PC-3 (cell line): ENCODE measurements at regions of chr4 and their contacts with region 1.

Region 1: DNA sequence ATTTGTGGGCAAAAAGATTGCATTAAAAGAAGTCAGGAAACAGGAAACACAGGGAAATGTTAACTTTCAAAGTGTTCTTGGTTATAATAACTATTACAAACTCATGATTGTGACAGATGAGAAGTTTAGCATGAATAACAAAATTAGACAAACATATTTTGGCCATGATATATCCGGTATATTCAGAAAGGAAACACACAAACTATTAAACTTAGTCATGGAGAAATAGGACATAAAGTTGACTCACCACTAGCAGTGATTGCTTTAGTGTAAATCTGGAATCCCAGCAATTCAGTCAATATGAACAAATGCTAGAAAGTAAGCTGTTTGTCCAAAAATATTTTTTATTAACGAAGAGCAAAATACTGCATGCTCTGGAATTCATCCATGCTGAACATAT is 1299.9 kb downstream of the C4orf33 start:
- DNase-seq: peak; percentile 73
- ATAC-seq: peak; percentile 94
- H3K4me3 ChIP-seq: no peak overlapping the region
- H3K27ac ChIP-seq: peak overlapping the region; percentile 71
- H3K4me1 ChIP-seq: peaks cover 14% of the 10 kb centered on the region
- H3K27me3 ChIP-seq: no peaks in the 10 kb centered on the region
- CTCF ChIP-seq: no peak

Region 2: DNA sequence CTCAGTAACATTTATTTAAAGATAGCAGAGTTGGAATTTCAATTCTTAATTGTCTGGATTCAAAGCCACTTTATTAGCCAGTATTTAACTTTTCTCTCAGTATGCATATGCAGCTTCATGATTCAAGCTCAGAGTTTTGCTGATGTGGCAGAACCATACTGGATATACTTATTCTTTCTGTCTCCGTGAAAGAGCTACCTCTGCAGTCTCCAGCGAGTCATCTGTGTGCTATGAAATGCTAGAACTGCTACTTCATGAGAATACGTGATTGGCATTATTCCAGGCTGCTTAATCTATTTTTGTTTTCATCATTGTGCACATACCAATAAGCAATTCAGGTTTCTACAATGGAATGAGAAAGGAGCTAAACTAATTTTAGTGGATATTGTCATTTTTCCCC is 556.2 kb before region 1 on chr4:
- CTCF ChIA-PET with region 1: no interaction called
- POLR2A ChIA-PET with region 1: no interaction called
- intact Hi-C with region 1: no loop called
- DNase-seq: no peak
- ATAC-seq: no peak
- H3K4me3 ChIP-seq: no peak overlapping the region
- H3K27ac ChIP-seq: no peak overlapping the region
- H3K4me1 ChIP-seq: no peaks in the 10 kb centered on the region
- H3K27me3 ChIP-seq: no peaks in the 10 kb centered on the region
- CTCF ChIP-seq: no peak

Region 3: DNA sequence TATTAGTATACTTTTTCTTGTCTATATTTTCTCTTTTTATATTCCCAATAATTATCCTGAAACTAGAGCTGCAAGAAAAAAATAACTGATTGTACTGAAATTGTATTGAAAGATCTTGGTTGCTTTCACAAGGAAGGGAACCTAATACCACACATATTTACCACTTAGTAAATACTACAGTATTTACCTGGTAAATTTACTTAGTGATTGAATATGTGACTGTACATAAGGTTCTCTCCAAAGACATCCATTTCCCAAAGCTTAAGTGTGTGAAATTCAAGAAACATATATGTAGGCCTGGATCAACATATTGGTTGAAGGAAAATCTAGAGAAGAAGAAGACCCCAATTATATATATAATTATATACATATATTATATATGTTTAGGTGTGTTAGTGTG is 27.2 kb before region 1 on chr4:
- CTCF ChIA-PET with region 1: no interaction called
- POLR2A ChIA-PET with region 1: no interaction called
- intact Hi-C with region 1: loop called (anchors 2 kb)
- DNase-seq: peak; percentile 18
- ATAC-seq: peak; percentile 91
- H3K4me3 ChIP-seq: no peak overlapping the region
- H3K27ac ChIP-seq: no peak overlapping the region
- H3K4me1 ChIP-seq: no peaks in the 10 kb centered on the region
- H3K27me3 ChIP-seq: no peaks in the 10 kb centered on the region
- CTCF ChIP-seq: no peak